Activated CD8-positive, alpha-beta T cell treated with anti-CD3 and anti-CD28 coated beads, Interleukin-2, amount 10 ng/mL, durations not matched to agents 7 days and 5 days (primary cell): ENCODE measurements at regions of chr9 and their contacts with region 1.

Region 1: GRCh38 chr9:130254752-130255630 is 10.6 kb upstream of the HMCN2 start:
- DNase-seq: no peak
- ATAC-seq: no peak
- H3K4me3 Mint-ChIP-seq: no peak overlapping the region
- H3K27ac Mint-ChIP-seq: no peak overlapping the region
- H3K4me1 Mint-ChIP-seq: no peaks in the 10 kb centered on the region
- H3K27me3 Mint-ChIP-seq: peaks cover 23% of the 10 kb centered on the region

Region 2: DNA sequence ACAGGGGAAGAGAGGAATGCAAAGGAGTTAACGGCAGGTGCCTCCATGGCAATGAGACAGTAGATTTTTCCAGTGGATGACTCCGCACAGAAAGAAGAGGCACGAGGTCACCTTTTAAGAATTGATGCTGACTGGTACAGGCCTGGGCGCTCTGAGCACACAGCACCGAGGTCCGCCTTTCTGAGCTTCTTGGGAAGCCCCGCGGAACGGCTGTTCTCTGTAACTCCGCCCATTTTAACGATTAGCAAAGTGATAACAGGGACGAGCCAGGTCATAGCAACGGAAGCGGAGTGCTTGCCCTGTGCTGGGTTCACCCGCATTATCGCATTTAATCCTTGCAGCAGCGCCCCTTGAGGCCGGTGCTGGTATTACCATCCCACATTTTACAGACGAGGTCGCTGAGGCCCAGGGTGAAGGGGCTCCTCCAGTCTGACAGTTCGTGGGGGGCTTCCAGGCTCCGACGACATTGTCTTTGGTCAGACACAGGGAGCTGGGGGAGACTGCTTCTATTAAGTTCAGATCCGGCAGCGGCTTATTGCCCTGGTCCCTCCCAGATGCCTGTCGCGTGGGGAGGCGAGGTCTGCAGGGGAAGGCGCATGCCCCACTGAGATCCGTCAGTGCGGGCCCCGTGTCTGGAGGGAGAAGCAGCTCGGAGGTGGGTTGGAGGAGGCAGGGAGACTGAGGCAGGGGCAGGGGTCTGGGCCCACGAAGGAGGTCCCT is 11.8 kb before region 1 on chr9:
- CTCF ChIA-PET with region 1: interaction called, 12 read pairs
- POLR2A ChIA-PET with region 1: interaction called, 3 read pairs
- DNase-seq: peak; percentile 86
- ATAC-seq: peak; percentile 83
- H3K4me3 Mint-ChIP-seq: peak overlapping the region; percentile 5
- H3K27ac Mint-ChIP-seq: peak overlapping the region; percentile 22
- H3K4me1 Mint-ChIP-seq: peaks cover 37% of the 10 kb centered on the region
- H3K27me3 Mint-ChIP-seq: peaks cover 3% of the 10 kb centered on the region

Region 3: DNA sequence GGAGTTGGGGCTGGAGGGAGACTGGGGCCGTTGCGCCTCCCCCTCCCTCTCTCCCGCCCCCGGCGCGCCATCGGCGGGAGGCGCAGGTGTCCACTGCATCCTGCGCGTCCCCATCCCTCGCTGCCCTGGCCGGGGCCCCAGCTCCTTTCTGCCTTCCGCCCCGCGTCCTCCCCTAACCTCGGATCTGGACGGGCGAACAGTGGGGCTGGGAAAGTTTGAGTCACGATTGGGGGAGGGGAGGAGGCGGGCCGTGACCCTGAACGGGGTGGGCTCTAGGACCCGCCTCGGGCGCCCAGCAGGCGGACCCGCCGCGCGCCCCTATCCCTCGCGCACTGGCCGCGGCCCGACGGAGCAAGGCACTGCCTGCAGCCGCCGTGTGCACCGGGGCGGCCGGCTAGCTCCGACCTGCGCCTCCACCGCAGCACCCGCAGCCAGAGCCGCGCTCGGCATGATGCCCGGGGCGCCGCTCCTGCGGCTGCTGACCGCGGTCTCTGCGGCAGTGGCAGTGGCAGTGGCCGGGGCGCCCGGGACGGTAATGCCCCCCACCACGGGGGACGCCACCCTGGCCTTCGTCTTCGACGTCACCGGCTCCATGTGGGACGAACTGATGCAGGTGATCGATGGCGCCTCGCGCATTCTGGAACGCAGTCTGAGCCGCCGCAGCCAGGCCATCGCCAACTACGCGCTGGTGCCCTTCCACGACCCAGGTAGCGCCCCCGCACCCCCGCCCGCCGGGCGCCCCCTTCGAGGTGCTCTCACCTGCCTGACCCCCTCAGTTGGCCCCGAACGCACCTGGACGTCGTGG is 10.6 kb after region 1 on chr9 and contains the start of gene HMCN2:
- CTCF ChIA-PET with region 1: no interaction called
- POLR2A ChIA-PET with region 1: no interaction called
- DNase-seq: no peak
- ATAC-seq: no peak
- H3K4me3 Mint-ChIP-seq: no peak within 1 kb of the TSS
- H3K27ac Mint-ChIP-seq: no peak within 1 kb of the TSS
- H3K4me1 Mint-ChIP-seq: no peaks in the 10 kb centered on the region
- H3K27me3 Mint-ChIP-seq: peaks cover 62% of the 10 kb centered on the region
- total RNA-seq, gene HMCN2: not detected